ENCODE measurements at regions of chr1 and their contacts with region 1.

Region 1: DNA sequence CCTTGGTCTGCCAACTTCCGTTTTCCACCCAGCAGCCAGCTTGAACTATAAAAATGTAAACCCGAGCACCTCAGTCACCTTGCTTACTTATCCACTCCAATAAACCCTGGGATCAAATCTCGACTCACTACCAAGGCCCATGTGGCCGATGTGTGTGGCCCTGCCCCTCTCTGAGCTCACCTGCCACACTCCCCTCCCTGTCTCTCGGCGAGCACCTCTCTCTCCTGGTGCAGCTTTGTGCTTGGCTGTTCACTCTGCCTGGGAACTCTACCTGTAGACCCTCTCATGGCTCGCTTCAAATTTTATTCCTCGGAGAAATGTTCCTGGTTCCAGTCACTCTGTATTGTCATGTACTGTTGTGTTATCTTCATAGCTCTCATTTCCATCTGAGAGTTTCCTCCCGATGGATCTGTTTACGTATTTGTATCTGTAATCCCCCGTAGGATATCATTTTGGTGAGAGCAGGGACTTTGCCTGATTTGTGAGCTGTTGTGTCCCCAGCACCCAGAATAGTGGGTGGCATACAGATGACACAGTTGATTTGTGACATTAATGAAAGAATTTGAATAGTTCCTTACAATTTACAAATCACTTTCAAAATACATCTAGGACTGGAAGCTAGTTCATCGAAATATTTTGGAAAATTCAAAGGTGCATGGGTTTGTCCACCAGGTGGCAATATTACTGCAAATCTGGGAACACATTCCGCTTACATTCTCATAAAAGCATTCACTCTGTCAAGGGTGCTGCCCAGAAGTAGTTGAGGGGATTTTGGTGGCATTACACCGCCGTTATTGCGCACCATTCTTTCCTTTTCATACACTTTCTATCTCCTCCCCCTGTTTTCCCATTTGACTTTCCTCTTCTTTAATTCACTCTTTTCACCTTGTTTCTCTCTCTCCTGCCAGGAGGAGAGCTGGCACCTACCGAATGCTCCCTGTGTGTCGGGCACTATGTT is 95.3 kb downstream of the ABCA4 start:
- DNase-seq: no peak
- H3K4me3 ChIP-seq: no peak overlapping the region
- H3K27ac ChIP-seq: no peak overlapping the region
- H3K4me1 ChIP-seq: peaks cover 0 to 17% (median 9%) of the 10 kb centered on the region in 4 donors
- H3K27me3 ChIP-seq: no peaks in the 10 kb centered on the region
- CTCF ChIP-seq: peak; percentile 62 to 73 (median 68)
- EP300 ChIP-seq: no peak
- POLR2A ChIP-seq: no peak

Region 2: GRCh38 chr1:94004924-94005323 is 20.7 kb before region 1 on chr1:
- intact Hi-C with region 1: no loop called
- DNase-seq: no peak
- H3K4me3 ChIP-seq: no peak overlapping the region
- H3K27ac ChIP-seq: no peak overlapping the region
- H3K4me1 ChIP-seq: no peaks in the 10 kb centered on the region
- H3K27me3 ChIP-seq: no peaks in the 10 kb centered on the region
- CTCF ChIP-seq: no peak
- EP300 ChIP-seq: no peak
- POLR2A ChIP-seq: no peak

Region 3: DNA sequence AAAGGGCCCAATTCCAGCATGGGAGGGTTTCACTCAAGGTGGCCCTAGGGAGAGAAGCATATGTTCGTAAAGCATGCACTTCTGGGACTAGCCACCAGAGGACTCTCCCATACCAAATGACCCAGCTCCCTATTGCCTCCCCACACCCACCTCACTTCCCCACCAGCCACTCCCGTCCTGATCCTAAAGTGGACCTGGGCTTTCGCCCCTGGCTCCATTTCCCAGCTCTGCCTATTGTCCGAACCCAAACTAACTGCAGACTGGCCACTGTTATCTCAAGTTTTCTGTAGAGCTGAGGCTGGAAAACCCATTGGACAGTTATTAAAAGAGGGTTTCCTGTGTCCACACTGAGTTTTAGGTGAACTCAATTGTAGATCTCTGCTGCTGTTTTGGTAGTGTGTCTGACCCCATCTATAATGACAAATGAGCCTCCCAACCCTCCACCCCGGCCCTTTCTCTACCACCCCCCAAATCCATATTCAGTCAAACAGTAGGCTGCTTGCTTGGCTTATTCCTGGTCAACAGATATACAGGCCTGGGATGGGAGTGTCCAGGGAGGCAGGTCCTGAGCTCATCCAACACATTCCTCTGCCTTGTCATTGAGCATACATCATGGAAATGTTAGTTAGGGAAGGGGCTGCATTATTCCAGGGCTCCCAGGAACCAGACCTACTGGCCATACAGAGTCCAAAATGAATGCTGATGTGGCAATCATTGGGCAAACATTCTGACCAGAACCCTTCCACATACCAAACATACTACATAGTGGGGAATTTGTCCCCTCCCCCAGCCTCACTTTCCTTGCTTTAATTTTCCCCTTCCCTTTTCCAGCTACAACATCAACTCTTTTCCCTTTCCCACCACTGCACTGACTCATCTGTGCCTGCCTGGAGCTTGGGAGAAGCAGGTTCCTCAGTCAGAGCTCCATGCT is 36.1 kb after region 1 on chr1:
- intact Hi-C with region 1: loop called (anchors 2 kb)
- DNase-seq: peak; percentile 82
- H3K4me3 ChIP-seq: no peak overlapping the region
- H3K27ac ChIP-seq: peak overlapping the region in 2 of 4 donors; percentile 27 to 53
- H3K4me1 ChIP-seq: peaks cover 5 to 34% (median 27%) of the 10 kb centered on the region in 4 donors
- H3K27me3 ChIP-seq: no peaks in the 10 kb centered on the region
- CTCF ChIP-seq: peak; percentile 92 to 98 (median 94)
- EP300 ChIP-seq: no peak
- POLR2A ChIP-seq: no peak

Region 4: GRCh38 chr1:94079080-94079940 is 53.6 kb after region 1 on chr1:
- intact Hi-C with region 1: no loop called
- DNase-seq: no peak
- H3K4me3 ChIP-seq: no peak overlapping the region
- H3K27ac ChIP-seq: no peak overlapping the region
- H3K4me1 ChIP-seq: peaks cover 0 to under 1% (median 0%) of the 10 kb centered on the region in 4 donors
- H3K27me3 ChIP-seq: no peaks in the 10 kb centered on the region
- CTCF ChIP-seq: no peak
- EP300 ChIP-seq: no peak
- POLR2A ChIP-seq: no peak

Measured in sigmoid colon (tissue), 7 donors.